Thyroid gland (tissue), 4 donors: ENCODE measurements at regions of chr16 and their contacts with region 1.

Region 1: GRCh38 chr16:19907161-19907992 is 22.7 kb upstream of the GPRC5B start:
- DNase-seq: peak; percentile 59 to 63
- H3K4me3 ChIP-seq: no peak overlapping the region
- H3K27ac ChIP-seq: no peak overlapping the region
- H3K4me1 ChIP-seq: peaks cover 0 to 3% of the 10 kb centered on the region in 2 donors
- H3K27me3 ChIP-seq: no peaks in the 10 kb centered on the region
- CTCF ChIP-seq: peak; percentile 83 to 97 (median 86)
- POLR2A ChIP-seq: no peak

Region 2: GRCh38 chr16:19717771-19718602 is 189.4 kb before region 1 on chr16 and contains the starts of genes IQCK and KNOP1:
- intact Hi-C with region 1: no loop called
- DNase-seq: peak; percentile 88 to 90
- H3K4me3 ChIP-seq: peak within 1 kb of the TSS; percentile 43 to 98 (median 92)
- H3K27ac ChIP-seq: peak within 1 kb of the TSS; percentile 36 to 63 (median 60)
- H3K4me1 ChIP-seq: peaks cover 23 to 26% of the 10 kb centered on the region in 2 donors
- H3K27me3 ChIP-seq: no peaks in the 10 kb centered on the region
- CTCF ChIP-seq: peak in 1 of 6 experiments; percentile 12
- POLR2A ChIP-seq: peak in 1 of 2 donors; percentile 69
- total RNA-seq, gene IQCK: 49.7 to 103 (median 94.2) TPM
- total RNA-seq, gene KNOP1: 8.9 to 11.5 (median 10.5) TPM

Region 3: DNA sequence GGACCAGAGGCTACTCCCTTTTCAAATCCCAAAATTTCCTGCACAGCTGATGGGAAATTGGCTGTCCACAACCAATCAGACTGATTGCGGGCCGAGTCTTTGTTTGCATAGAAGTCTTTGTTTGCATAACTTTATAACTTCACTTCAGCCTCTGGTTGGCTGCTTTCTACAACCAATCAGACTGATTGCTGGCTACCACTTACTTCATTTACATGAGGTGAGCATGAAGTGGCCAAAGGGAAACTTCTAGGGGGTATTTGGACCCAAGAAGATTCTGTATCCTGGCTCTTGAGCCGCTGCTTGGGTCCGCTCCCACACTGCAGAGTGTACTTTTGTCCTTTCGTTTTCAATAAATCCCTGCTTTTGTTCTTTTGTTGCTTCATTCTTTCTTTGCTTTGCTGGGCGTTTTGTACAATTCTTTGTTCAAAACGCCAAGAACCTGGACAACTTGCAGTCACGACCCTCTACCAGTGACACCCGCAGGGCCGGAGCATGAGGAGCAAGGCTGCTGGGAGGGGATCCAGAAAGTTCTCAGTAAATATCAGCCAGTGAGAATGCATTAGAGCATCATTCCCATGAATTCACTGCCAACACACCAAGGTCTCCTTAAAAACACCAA is 121.8 kb before region 1 on chr16:
- intact Hi-C with region 1: no loop called
- DNase-seq: no peak
- H3K4me3 ChIP-seq: no peak overlapping the region
- H3K27ac ChIP-seq: peak overlapping the region in 1 of 3 donors; percentile 5
- H3K4me1 ChIP-seq: peaks cover 0 to 22% of the 10 kb centered on the region in 2 donors
- H3K27me3 ChIP-seq: no peaks in the 10 kb centered on the region
- CTCF ChIP-seq: no peak
- POLR2A ChIP-seq: no peak

Region 4: DNA sequence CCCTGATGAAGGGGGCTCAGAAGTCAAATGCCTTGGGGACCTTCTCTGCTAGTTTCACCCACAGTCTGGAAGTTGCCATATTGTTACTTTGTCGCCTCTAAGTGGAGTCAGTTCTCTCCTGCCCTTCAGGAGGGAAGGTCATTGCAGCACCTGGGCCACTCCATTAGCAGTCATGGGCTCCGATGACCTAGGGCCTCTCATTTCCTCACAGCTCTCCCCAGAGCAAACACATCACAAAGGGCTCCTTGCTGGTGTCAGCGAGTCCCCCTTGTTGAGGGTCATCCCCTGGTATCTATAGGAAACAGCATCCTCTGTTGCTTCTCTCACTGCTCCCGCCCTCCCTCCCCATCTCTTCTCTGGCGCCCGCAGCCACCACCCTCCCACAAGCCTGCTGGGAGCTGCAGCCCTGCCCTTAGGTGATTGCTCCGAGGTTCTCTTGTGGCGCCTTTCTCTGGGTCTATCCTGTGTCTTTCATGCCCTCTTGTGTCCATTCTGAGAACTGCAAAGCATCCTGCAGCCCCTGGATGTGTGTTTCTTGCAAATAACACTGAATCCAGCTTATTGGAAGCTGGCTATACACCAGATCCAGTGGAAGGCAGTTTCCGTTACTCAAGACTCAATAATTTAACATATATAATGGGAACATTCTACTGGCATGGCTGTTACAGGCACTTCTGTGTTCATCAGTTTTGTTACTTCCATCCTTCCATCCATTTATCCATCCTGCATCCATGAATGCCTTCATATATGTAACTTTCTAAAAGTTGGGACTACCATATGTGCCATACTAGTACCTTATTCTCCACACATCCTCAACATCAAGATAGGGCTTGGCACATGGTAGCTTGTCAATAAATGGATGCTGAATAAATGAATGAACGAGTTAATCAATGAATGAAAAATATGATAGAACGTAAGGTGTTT is 476.0 kb after region 1 on chr16:
- intact Hi-C with region 1: loop called (anchors 10 kb)
- DNase-seq: peak; percentile 54 to 60
- H3K4me3 ChIP-seq: no peak overlapping the region
- H3K27ac ChIP-seq: no peak overlapping the region
- H3K4me1 ChIP-seq: no peaks in the 10 kb centered on the region
- H3K27me3 ChIP-seq: no peaks in the 10 kb centered on the region
- CTCF ChIP-seq: peak; percentile 58 to 81 (median 64)
- POLR2A ChIP-seq: no peak